Endothelial cell of umbilical vein (primary cell): ENCODE measurements at regions of chr14 and their contacts with region 1.

Region 1: GRCh38 chr14:93206793-93207467 is at the starts of genes GON7 and UBR7:
- DNase-seq: peak; percentile 97
- H3K4me3 ChIP-seq: peak within 1 kb of the TSS; percentile 77 to 88 (median 77)
- H3K27ac ChIP-seq: peak within 1 kb of the TSS; percentile 79
- H3K4me1 ChIP-seq: peaks cover 12% of the 10 kb centered on the region
- H3K27me3 ChIP-seq: no peaks in the 10 kb centered on the region
- CTCF ChIP-seq: peak in 1 of 2 donors; percentile 12
- POLR2A ChIP-seq: peak; percentile 76
- total RNA-seq, gene GON7: 11.1 and 11.5 TPM in 2 replicates
- total RNA-seq, gene UBR7: 22.2 and 24.1 TPM in 2 replicates

Region 2: DNA sequence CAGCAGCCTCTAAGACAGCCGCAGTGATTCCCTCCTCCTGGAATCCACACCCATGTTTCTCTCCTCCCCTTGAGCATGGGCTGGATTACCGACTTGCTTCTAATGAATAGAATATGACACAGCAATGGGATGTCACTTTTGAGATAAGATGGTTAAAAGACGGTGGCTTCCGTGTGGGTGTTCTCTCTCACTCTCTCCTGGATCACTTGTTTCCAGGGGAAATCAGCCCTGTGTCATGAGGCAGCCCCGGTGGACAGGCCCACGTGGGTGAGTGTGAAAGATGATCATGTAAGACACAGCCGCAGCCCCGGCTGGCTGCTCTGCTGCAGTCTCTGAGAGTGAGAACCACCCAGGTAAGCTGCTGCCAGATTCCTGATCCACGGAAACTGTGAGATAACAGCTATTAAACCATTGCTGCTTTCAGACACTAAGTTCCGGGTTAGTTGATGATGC is 33.0 kb before region 1 on chr14:
- CTCF ChIA-PET with region 1: interaction called, 11 read pairs
- POLR2A ChIA-PET with region 1: no interaction called
- dilution Hi-C with region 1: no loop called
- intact Hi-C with region 1: no loop called
- DNase-seq: no peak
- H3K4me3 ChIP-seq: no peak overlapping the region
- H3K27ac ChIP-seq: no peak overlapping the region
- H3K4me1 ChIP-seq: no peaks in the 10 kb centered on the region
- H3K27me3 ChIP-seq: no peaks in the 10 kb centered on the region
- CTCF ChIP-seq: no peak
- POLR2A ChIP-seq: no peak

Region 3: DNA sequence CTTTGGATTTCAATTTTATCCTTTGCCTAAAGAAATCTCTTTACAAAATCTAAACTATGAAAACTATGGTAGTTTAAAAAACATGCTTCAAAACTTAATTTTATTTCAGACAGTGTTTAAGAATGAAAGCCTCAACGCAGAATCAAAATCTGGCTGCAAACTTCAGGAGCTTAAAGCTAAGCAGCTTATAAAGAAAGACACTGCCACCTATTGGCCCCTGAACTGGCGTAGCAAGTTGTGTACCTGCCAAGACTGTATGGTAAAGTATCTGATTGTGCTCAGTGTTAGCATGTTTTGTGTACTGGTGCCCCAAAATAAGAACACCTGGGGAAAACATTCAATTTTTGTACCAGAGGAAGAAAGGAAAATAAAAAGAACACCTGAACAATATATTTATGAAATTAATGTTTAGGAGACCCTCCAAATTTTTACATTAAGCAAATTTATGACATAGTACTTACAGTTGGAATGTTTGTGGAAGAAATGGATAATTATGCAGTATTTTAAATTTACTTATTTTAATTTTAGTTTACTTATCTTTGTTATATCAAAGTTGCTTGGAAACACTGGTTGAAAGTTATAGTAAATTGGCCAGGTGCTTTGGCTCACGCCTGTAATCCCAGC is 12.3 kb after region 1 on chr14:
- CTCF ChIA-PET with region 1: interaction called, 26 read pairs
- POLR2A ChIA-PET with region 1: interaction called, 7 read pairs
- dilution Hi-C with region 1: no loop called
- intact Hi-C with region 1: no loop called
- DNase-seq: peak; percentile 59
- H3K4me3 ChIP-seq: no peak overlapping the region
- H3K27ac ChIP-seq: no peak overlapping the region
- H3K4me1 ChIP-seq: no peaks in the 10 kb centered on the region
- H3K27me3 ChIP-seq: no peaks in the 10 kb centered on the region
- CTCF ChIP-seq: peak; percentile 45 to 68
- POLR2A ChIP-seq: no peak

Region 4: DNA sequence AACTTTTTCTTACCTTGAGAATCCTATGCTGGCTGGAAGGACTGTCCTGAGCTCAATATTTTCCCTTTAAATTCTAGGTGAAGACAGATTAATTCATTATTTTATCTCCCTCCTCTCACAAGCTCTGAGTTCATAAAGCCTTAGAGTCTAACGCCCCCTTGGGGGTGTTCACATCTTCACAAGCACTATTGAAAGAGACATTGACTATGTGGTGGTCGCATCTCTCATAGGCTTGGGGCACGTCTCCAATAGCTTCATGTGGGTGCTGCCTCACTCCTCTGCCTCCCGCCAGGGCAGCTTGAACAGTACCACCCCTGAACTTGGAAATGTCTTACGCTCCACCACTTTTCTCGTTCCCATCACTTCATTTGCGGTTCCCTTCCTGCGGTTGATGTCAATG is 330.0 kb after region 1 on chr14:
- CTCF ChIA-PET with region 1: interaction called, 14 read pairs
- POLR2A ChIA-PET with region 1: no interaction called
- dilution Hi-C with region 1: no loop called
- intact Hi-C with region 1: no loop called
- DNase-seq: peak; percentile 5
- H3K4me3 ChIP-seq: no peak overlapping the region
- H3K27ac ChIP-seq: no peak overlapping the region
- H3K4me1 ChIP-seq: no peaks in the 10 kb centered on the region
- H3K27me3 ChIP-seq: no peaks in the 10 kb centered on the region
- CTCF ChIP-seq: peak in 1 of 2 donors; percentile 14
- POLR2A ChIP-seq: no peak

Region 5: DNA sequence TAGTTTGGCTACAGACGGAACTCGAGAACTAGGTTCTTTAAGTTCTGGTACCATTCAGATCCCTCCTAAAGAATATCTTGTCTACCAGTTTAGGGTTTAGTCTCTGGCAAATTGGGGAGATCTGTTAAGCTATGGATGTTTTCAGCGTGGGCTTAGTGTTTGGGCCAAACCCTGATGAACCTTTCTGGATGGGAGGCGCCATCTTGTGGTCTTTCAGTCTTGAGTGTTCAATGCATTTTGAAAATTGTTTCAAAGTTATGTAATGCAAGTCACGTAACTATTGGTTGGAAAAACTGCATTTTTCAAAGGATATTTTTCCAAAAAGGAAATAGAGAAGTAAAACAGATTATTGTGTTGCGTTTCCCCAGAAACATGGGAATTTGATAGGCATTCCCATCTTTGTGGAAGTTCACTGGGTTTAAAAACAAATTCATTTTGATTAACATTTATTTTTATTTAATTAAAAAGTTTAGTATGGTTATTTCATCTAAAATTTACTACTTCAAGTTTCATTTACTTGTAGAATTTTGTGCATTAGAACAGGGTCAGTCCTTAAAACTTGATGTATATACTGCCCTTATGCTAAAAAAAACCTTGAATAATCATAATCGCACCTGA is 412.4 kb after region 1 on chr14:
- CTCF ChIA-PET with region 1: interaction called, 30 read pairs
- POLR2A ChIA-PET with region 1: no interaction called
- dilution Hi-C with region 1: no loop called
- intact Hi-C with region 1: loop called (anchors 1 kb)
- DNase-seq: peak; percentile 43
- H3K4me3 ChIP-seq: no peak overlapping the region
- H3K27ac ChIP-seq: no peak overlapping the region
- H3K4me1 ChIP-seq: no peaks in the 10 kb centered on the region
- H3K27me3 ChIP-seq: no peaks in the 10 kb centered on the region
- CTCF ChIP-seq: peak; percentile 31 to 43
- POLR2A ChIP-seq: no peak